Activated T-helper 1 cell treated with anti-CD3 and anti-CD28 coated beads, Interleukin-12 subunit alpha, Interleukin-12 subunit beta, Interleukin-2, Interleukin-4 antibody, amounts not matched to agents 30 ng/mL and 10 ng/mL and 1 ng/mL, durations not matched to agents 14 hours and 24 hours and 36 hours (primary cell): ENCODE measurements at regions of chr1 and their contacts with region 1.

Region 1: GRCh38 chr1:231211005-231211857 is 29.8 kb upstream of the GNPAT start:
- DNase-seq: peak; percentile 81
- H3K4me3 Mint-ChIP-seq: peak overlapping the region; percentile 82
- H3K27ac Mint-ChIP-seq: peak overlapping the region; percentile 66
- H3K4me1 Mint-ChIP-seq: peaks cover 9% of the 10 kb centered on the region
- H3K27me3 Mint-ChIP-seq: peaks cover 5% of the 10 kb centered on the region

Region 2: GRCh38 chr1:230797942-230798418 is 413.3 kb before region 1 on chr1:
- intact Hi-C with region 1: loop called (anchors 1 kb)
- DNase-seq: no peak
- H3K4me3 Mint-ChIP-seq: no peak overlapping the region
- H3K27ac Mint-ChIP-seq: no peak overlapping the region
- H3K4me1 Mint-ChIP-seq: no peaks in the 10 kb centered on the region
- H3K27me3 Mint-ChIP-seq: peaks cover 1% of the 10 kb centered on the region

Region 3: GRCh38 chr1:230867903-230868735 is 343.1 kb before region 1 on chr1 and contains the start of gene C1orf198:
- intact Hi-C with region 1: loop called (anchors 1 kb)
- DNase-seq: peak; percentile 59
- H3K4me3 Mint-ChIP-seq: peak within 1 kb of the TSS; percentile 87
- H3K27ac Mint-ChIP-seq: peak within 1 kb of the TSS; percentile 80
- H3K4me1 Mint-ChIP-seq: peaks cover 28% of the 10 kb centered on the region
- H3K27me3 Mint-ChIP-seq: peaks cover 39% of the 10 kb centered on the region
- total RNA-seq, gene C1orf198: 14.1 and 14.6 TPM in 2 replicates

Region 4: GRCh38 chr1:230917284-230918135 is 293.7 kb before region 1 on chr1:
- intact Hi-C with region 1: loop called (anchors 1 kb)
- DNase-seq: peak; percentile 44
- H3K4me3 Mint-ChIP-seq: no peak overlapping the region
- H3K27ac Mint-ChIP-seq: no peak overlapping the region
- H3K4me1 Mint-ChIP-seq: no peaks in the 10 kb centered on the region
- H3K27me3 Mint-ChIP-seq: no peaks in the 10 kb centered on the region

Region 5: GRCh38 chr1:231040019-231040799 is 171.0 kb before region 1 on chr1 and contains the start of gene FAM89A:
- intact Hi-C with region 1: loop called (anchors 5 kb)
- DNase-seq: peak; percentile 57
- H3K4me3 Mint-ChIP-seq: peak within 1 kb of the TSS; percentile 84
- H3K27ac Mint-ChIP-seq: peak within 1 kb of the TSS; percentile 77
- H3K4me1 Mint-ChIP-seq: peaks cover 35% of the 10 kb centered on the region
- H3K27me3 Mint-ChIP-seq: peaks cover 40% of the 10 kb centered on the region
- total RNA-seq, gene FAM89A: 23.2 and 28.0 TPM in 2 replicates

Region 6: DNA sequence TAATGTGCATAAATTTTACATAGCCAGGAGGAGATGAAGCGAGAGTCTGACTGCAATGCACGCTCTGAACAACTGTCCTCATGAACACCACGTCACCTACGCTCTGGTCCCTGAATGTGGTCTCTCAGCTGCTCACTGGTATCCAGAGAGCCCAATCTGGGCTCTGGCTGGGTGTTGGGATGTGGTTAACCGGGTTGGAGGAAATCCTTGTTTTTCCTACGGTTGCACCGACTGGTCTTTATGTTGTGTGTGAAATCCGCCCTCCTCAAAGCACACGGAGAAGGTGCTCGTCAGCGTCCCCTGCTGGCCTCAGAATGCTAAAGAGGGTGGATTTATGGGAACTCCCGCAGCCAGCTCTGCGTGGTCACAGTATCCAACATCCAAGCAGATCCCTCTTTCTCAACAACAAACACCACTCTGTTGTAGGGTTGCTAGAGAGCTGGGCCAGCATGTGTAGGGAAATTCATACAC is 119.4 kb before region 1 on chr1:
- intact Hi-C with region 1: loop called (anchors 1 kb)
- DNase-seq: no peak
- H3K4me3 Mint-ChIP-seq: no peak overlapping the region
- H3K27ac Mint-ChIP-seq: no peak overlapping the region
- H3K4me1 Mint-ChIP-seq: no peaks in the 10 kb centered on the region
- H3K27me3 Mint-ChIP-seq: peaks cover 18% of the 10 kb centered on the region

Region 7: GRCh38 chr1:231266811-231267322 is 55.6 kb after region 1 on chr1:
- intact Hi-C with region 1: no loop called
- DNase-seq: no peak
- H3K4me3 Mint-ChIP-seq: no peak overlapping the region
- H3K27ac Mint-ChIP-seq: no peak overlapping the region
- H3K4me1 Mint-ChIP-seq: peaks cover 9% of the 10 kb centered on the region
- H3K27me3 Mint-ChIP-seq: no peaks in the 10 kb centered on the region

Region 8: GRCh38 chr1:231295938-231296337 is 84.7 kb after region 1 on chr1:
- intact Hi-C with region 1: no loop called
- DNase-seq: no peak
- H3K4me3 Mint-ChIP-seq: no peak overlapping the region
- H3K27ac Mint-ChIP-seq: no peak overlapping the region
- H3K4me1 Mint-ChIP-seq: no peaks in the 10 kb centered on the region
- H3K27me3 Mint-ChIP-seq: peaks cover under 1% of the 10 kb centered on the region